Transverse colon (tissue), 4 donors: ENCODE measurements at regions of chr22 and their contacts with region 1.

Region 1: GRCh38 chr22:40147388-40148176 is 30.1 kb upstream of the TNRC6B start:
- DNase-seq: peak; percentile 15
- H3K4me3 ChIP-seq: no peak overlapping the region
- H3K27ac ChIP-seq: peak overlapping the region in 1 of 4 donors; percentile 18
- H3K4me1 ChIP-seq: peaks cover 0 to 4% (median 2%) of the 10 kb centered on the region in 4 donors
- H3K27me3 ChIP-seq: no peaks in the 10 kb centered on the region
- CTCF ChIP-seq: no peak
- EP300 ChIP-seq: no peak
- POLR2A ChIP-seq: no peak

Region 2: GRCh38 chr22:40889116-40889515 is 741.5 kb after region 1 on chr22:
- in situ Hi-C with region 1: no loop called
- intact Hi-C with region 1: loop called (anchors 5 kb)
- DNase-seq: no peak
- H3K4me3 ChIP-seq: no peak overlapping the region
- H3K27ac ChIP-seq: no peak overlapping the region
- H3K4me1 ChIP-seq: no peaks in the 10 kb centered on the region
- H3K27me3 ChIP-seq: no peaks in the 10 kb centered on the region
- CTCF ChIP-seq: no peak
- EP300 ChIP-seq: no peak
- POLR2A ChIP-seq: no peak